ENCODE measurements at regions of chr9 and their contacts with region 1.

Region 1: GRCh38 chr9:4604678-4605095 is 57.4 kb upstream of the PLPP6 start:
- DNase-seq: peak; percentile 82
- ATAC-seq: peak; percentile 84
- H3K4me3 Mint-ChIP-seq: no peak overlapping the region
- H3K27ac Mint-ChIP-seq: no peak overlapping the region
- H3K4me1 Mint-ChIP-seq: peaks cover 34% of the 10 kb centered on the region
- H3K27me3 Mint-ChIP-seq: no peaks in the 10 kb centered on the region

Region 2: DNA sequence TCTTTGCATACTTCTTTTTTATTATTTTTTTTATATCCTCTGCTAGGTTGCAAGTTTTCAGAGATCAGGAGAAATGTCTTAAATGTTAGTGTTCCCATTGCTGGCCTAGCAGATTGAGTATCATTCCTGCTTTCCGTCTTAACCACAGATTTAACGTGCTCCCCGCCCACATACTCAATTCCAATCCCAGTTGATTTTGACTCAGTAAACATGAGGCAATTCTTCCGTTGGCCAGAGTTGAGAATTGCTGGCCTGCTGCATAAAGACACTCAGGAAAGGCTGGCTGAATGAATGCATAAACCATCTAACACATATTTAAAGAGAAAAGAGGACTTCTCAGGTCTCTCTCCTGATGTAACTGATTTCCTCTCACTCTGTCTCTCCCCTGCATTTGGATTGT is 10.6 kb after region 1 on chr9:
- CTCF ChIA-PET with region 1: interaction called, 19 read pairs
- POLR2A ChIA-PET with region 1: no interaction called
- intact Hi-C with region 1: no loop called
- DNase-seq: no peak
- ATAC-seq: no peak
- H3K4me3 Mint-ChIP-seq: no peak overlapping the region
- H3K27ac Mint-ChIP-seq: no peak overlapping the region
- H3K4me1 Mint-ChIP-seq: peaks cover 12% of the 10 kb centered on the region
- H3K27me3 Mint-ChIP-seq: no peaks in the 10 kb centered on the region

Region 3: DNA sequence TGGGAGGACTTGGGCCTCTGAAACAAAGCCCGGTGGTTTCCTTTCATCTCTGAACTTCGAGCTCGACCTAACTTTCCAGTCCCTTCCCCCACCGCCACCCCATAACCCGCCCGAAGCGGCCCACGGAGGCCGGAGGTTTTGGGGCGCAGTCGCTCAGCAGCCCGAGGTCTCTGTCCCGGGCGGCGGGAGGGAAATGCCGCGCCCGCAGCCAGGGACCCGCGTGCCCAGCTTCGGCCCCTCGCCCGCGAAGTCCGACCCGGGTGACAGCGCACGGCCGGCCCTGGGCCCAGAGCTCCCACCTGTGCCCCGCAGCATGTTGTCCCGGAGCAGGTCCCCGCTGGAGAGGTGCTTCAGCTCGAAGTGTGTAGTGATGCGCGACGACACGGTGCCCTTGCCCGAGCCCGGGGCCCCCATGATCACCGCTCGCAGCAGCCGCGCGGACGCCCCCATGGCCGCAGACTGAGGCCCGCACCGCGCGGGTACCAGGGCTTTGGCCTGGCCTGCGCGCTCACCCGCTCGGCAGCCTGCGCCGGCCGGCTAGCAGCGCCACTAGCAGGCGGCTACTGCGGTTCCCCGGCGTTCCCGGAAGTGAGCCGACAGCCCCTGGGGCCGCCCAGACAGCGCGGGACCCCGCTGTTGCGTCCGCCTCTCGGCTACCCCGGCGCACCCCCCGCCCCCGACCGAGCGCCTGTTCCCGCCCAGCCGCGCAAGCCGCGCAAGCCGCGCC is 136.1 kb after region 1 on chr9 and contains the start of gene AK3:
- CTCF ChIA-PET with region 1: interaction called, 6 read pairs
- POLR2A ChIA-PET with region 1: no interaction called
- intact Hi-C with region 1: loop called in 1 of 2 experiments (anchors 2 kb)
- DNase-seq: peak; percentile 91
- ATAC-seq: peak; percentile 87
- H3K4me3 Mint-ChIP-seq: peak within 1 kb of the TSS; percentile 88
- H3K27ac Mint-ChIP-seq: peak within 1 kb of the TSS; percentile 93
- H3K4me1 Mint-ChIP-seq: peaks cover 40% of the 10 kb centered on the region
- H3K27me3 Mint-ChIP-seq: no peaks in the 10 kb centered on the region
- total RNA-seq, gene AK3: 32.6 to 41.0 TPM

Region 4: GRCh38 chr9:4849364-4849763 is 244.7 kb after region 1 on chr9:
- CTCF ChIA-PET with region 1: no interaction called
- POLR2A ChIA-PET with region 1: no interaction called
- intact Hi-C with region 1: no loop called
- DNase-seq: no peak
- ATAC-seq: no peak
- H3K4me3 Mint-ChIP-seq: no peak overlapping the region
- H3K27ac Mint-ChIP-seq: no peak overlapping the region
- H3K4me1 Mint-ChIP-seq: no peaks in the 10 kb centered on the region
- H3K27me3 Mint-ChIP-seq: no peaks in the 10 kb centered on the region

Measured in activated CD4-positive, alpha-beta T cell treated with anti-CD3 and anti-CD28 coated beads for 36 hours (primary cell).